Panc1 (cell line): ENCODE measurements at regions of chr3 and their contacts with region 1.

Region 1: DNA sequence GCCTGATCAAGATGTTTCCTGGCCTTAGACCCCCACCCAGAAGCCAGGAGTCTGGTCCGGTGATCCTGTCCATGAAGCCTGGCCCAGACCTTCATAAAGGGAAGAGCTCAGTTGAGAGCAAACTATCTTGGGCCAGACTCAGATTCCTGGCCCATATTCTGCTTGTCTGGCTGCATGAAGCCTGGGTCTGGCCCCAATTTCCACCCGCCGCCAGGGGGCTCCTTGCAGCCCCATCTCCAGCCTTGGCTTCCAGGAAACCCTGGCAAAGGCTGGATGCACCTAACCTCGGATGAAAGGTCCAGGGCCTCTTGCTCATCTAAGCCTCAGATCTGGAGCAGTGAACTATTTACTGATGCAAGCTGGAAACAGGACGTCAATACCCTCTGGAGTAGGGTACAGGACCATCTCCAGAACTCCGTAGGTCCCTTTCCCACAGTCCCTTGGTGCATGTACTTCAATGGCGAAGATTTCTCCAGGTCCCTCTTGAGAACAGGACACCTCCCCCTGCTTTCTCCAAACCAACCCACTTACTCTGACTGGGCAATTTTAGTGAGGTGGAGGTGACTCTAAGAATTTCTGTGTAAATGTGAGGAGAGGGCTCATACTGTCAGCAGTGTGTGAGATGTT is 5.6 kb downstream of the FOXL2 start:
- DNase-seq: no peak
- ATAC-seq: peak; percentile 55; the same call in 1 of the 2 replicates
- H3K4me3 ChIP-seq: no peak overlapping the region
- H3K27ac ChIP-seq: no peak overlapping the region; the same call in 1 of the 2 replicates
- H3K4me1 ChIP-seq: peaks cover 34% of the 10 kb centered on the region
- H3K27me3 ChIP-seq: no peaks in the 10 kb centered on the region
- CTCF ChIP-seq: peak; percentile 92

Region 2: GRCh38 chr3:138898301-138898700 is 43.1 kb before region 1 on chr3:
- CTCF ChIA-PET with region 1: no interaction called
- POLR2A ChIA-PET with region 1: no interaction called
- in situ Hi-C with region 1: no loop called
- intact Hi-C with region 1: no loop called
- DNase-seq: no peak
- ATAC-seq: no peak
- H3K4me3 ChIP-seq: no peak overlapping the region
- H3K27ac ChIP-seq: no peak overlapping the region
- H3K4me1 ChIP-seq: no peaks in the 10 kb centered on the region
- H3K27me3 ChIP-seq: no peaks in the 10 kb centered on the region
- CTCF ChIP-seq: no peak

Region 3: DNA sequence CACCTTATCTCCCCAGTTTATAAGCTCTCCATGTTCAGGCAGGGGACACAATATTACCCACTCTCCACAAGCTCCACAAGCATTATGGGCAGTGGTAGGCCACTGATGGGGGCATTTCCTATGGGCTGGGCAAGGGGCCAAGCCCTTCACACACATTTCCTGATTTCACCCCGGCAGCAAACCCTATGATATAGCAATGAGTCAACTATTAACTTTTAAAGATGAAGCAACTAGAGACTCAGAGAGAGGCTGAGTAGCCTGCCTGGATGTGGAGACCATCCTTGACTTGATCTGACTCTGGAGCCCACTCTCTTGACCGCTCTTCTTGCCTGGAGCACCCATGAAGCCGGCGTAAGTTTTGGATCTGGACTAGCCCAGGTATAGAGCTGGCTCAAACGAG is 33.1 kb after region 1 on chr3:
- CTCF ChIA-PET with region 1: interaction called, 10 read pairs
- POLR2A ChIA-PET with region 1: no interaction called
- in situ Hi-C with region 1: no loop called
- intact Hi-C with region 1: loop called (anchors 5 kb)
- DNase-seq: no peak
- ATAC-seq: no peak; the same call in 1 of the 2 replicates
- H3K4me3 ChIP-seq: no peak overlapping the region
- H3K27ac ChIP-seq: no peak overlapping the region
- H3K4me1 ChIP-seq: no peaks in the 10 kb centered on the region
- H3K27me3 ChIP-seq: no peaks in the 10 kb centered on the region
- CTCF ChIP-seq: no peak

Region 4: GRCh38 chr3:139006051-139006716 is 64.8 kb after region 1 on chr3 and contains the start of gene PRR23A:
- CTCF ChIA-PET with region 1: no interaction called
- POLR2A ChIA-PET with region 1: no interaction called
- in situ Hi-C with region 1: no loop called
- intact Hi-C with region 1: no loop called
- DNase-seq: no peak
- ATAC-seq: no peak
- H3K4me3 ChIP-seq: no peak within 1 kb of the TSS
- H3K27ac ChIP-seq: no peak within 1 kb of the TSS
- H3K4me1 ChIP-seq: no peaks in the 10 kb centered on the region
- H3K27me3 ChIP-seq: no peaks in the 10 kb centered on the region
- CTCF ChIP-seq: no peak
- total RNA-seq, gene PRR23A: not detected

Region 5: GRCh38 chr3:139329345-139329850 is 388.0 kb after region 1 on chr3:
- CTCF ChIA-PET with region 1: interaction called, 13 read pairs
- POLR2A ChIA-PET with region 1: no interaction called
- in situ Hi-C with region 1: no loop called
- intact Hi-C with region 1: loop called (anchors 1 kb)
- DNase-seq: peak; percentile 45
- ATAC-seq: peak; percentile 98
- H3K4me3 ChIP-seq: peak overlapping the region in 1 of 2 experiments; percentile 40; a peak in 2 of 4 replicates
- H3K27ac ChIP-seq: peak overlapping the region; percentile 71
- H3K4me1 ChIP-seq: peaks cover 7% of the 10 kb centered on the region
- H3K27me3 ChIP-seq: no peaks in the 10 kb centered on the region; the same call in 1 of the 2 replicates
- CTCF ChIP-seq: peak; percentile 100